Activated CD8-positive, alpha-beta T cell treated with anti-CD3 and anti-CD28 coated beads for 36 hours (primary cell): ENCODE measurements at regions of chr11 and their contacts with region 1.

Region 1: DNA sequence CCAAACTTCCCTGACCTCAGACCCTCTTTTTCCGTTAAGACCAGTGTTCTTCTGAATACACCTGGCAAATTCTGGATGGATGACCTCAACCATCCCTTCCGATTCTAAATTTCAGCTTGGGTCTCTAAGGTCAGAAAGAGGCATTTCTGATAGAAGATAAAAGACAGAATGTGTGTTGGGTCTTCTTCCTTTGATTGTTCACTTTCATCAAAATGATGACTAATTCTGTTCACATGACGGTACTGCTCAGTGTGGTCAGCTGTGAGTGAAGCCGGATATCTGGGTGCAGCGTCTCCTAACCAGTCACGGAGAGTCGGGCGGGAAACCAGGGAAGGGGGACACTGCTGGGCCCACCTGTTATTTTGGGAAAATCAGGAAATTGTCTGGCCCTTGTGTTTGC is 151.6 kb upstream of the NAV2 start:
- DNase-seq: no peak
- ATAC-seq: no peak
- H3K4me3 Mint-ChIP-seq: no peak overlapping the region
- H3K27ac Mint-ChIP-seq: no peak overlapping the region
- H3K4me1 Mint-ChIP-seq: no peaks in the 10 kb centered on the region
- H3K27me3 Mint-ChIP-seq: peaks cover 8% of the 10 kb centered on the region
- CTCF ChIP-seq: no peak

Region 2: DNA sequence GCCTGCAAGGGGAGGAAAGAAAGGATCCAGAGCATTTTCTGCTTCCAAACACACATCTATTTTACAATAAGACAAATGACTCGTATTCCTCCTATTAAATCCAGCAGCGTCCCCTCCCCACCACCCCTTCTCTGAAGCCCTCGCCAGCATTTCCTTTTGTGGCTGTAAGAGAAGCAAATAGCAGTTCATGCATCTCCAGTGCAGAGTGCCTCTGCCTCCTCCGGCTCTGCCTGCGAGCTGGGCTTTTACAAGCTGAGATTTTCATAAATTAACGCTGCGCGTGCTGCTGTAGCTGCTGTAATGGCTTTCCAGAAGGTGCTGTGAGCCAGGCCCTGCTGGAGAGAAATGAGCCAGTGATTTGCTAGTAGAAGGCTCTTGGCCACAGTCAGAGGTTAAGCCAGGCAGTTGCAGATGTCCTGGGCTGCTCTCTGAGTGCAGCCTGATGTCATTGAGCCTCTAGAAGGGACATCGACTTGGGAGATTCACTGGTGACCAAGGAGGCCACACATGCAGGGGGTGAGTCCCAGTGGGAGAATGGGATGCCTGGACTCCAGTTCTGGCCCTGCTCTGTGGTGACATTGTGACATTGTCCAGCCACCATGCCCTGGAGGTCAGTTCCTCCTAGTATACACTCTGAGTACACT is 17.1 kb after region 1 on chr11:
- CTCF ChIA-PET with region 1: interaction called, 11 read pairs
- POLR2A ChIA-PET with region 1: no interaction called
- intact Hi-C with region 1: no loop called
- DNase-seq: no peak
- ATAC-seq: no peak
- H3K4me3 Mint-ChIP-seq: no peak overlapping the region
- H3K27ac Mint-ChIP-seq: no peak overlapping the region
- H3K4me1 Mint-ChIP-seq: no peaks in the 10 kb centered on the region
- H3K27me3 Mint-ChIP-seq: no peaks in the 10 kb centered on the region
- CTCF ChIP-seq: no peak

Region 3: GRCh38 chr11:19664896-19665548 is 104.0 kb after region 1 on chr11:
- CTCF ChIA-PET with region 1: no interaction called
- POLR2A ChIA-PET with region 1: no interaction called
- intact Hi-C with region 1: no loop called
- DNase-seq: no peak
- ATAC-seq: no peak
- H3K4me3 Mint-ChIP-seq: no peak overlapping the region
- H3K27ac Mint-ChIP-seq: no peak overlapping the region
- H3K4me1 Mint-ChIP-seq: peaks cover 4% of the 10 kb centered on the region
- H3K27me3 Mint-ChIP-seq: no peaks in the 10 kb centered on the region
- CTCF ChIP-seq: no peak

Region 4: DNA sequence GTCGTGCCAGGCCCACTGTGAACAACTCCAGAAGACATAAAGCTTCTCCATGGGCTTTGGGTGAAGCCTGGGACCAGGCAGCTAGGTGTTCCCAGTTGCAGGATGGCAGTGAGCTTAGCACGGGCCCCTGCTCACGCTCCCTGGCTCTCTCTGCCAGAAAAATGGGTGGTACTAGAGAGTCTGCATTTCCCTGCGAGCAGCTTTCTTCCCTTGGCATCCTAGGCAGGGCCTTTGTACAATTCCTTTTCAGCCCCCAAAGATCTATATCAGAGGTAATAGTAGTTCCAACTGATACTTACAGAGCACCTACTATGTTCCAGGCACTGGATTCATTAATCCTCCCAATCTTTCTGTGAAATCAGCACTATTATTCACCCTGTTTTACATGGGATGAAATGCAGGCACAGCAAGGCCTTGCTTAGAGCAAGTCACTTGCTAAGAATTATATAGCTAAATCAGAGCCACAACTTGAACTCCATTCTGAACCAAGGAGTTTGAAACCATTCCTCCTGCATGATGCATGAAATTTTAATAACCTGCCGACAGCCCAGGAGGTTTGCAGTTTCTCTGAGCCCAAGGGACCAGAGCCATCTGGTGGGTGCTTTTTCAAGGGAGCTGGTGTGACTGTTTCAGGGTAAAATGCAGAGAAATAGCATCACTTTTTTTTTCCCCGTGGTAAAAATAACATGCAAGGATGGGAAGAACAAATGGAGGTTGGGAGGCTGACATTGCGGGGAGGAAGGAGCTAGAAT is 174.3 kb after region 1 on chr11:
- CTCF ChIA-PET with region 1: interaction called, 21 read pairs
- POLR2A ChIA-PET with region 1: no interaction called
- intact Hi-C with region 1: no loop called
- DNase-seq: no peak
- ATAC-seq: no peak
- H3K4me3 Mint-ChIP-seq: no peak overlapping the region
- H3K27ac Mint-ChIP-seq: no peak overlapping the region
- H3K4me1 Mint-ChIP-seq: no peaks in the 10 kb centered on the region
- H3K27me3 Mint-ChIP-seq: no peaks in the 10 kb centered on the region
- CTCF ChIP-seq: no peak

Region 5: DNA sequence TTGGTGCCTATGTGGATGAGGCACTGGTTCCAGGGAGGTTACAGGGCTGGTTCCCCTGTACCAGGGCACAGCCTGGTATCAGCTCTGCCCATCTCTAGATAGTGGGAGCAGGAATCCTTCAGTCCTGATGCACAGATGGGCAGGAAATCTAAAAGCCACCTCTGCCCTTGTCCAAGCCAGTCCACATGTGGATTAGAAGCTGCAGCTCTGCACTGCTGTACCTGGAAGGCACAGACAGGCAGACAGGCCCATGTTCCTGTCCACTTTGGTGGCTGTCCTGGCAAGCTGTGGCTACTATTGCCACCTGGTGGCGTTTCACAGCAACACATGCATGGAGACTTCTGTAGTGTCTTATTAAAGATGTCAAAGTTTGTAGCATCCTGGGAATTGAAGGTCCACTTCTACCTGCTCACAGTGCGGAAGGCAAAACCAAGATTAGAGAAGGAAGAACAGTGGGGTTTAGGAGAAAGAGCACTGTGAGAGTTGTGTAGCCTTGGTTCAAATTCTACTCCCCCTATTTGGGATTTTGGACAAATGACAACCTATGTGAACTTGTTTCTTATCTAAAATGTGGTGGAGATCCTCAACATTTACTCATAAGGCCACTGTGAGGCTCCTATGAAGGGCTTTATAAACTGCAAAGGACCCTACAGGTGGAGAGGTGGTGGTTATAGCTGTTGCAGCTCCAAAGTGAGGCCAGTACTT is 181.7 kb after region 1 on chr11:
- CTCF ChIA-PET with region 1: interaction called, 56 read pairs
- POLR2A ChIA-PET with region 1: no interaction called
- intact Hi-C with region 1: loop called (anchors 2 kb)
- DNase-seq: peak; percentile 77
- ATAC-seq: peak; percentile 84
- H3K4me3 Mint-ChIP-seq: no peak overlapping the region
- H3K27ac Mint-ChIP-seq: no peak overlapping the region
- H3K4me1 Mint-ChIP-seq: no peaks in the 10 kb centered on the region
- H3K27me3 Mint-ChIP-seq: peaks cover 6% of the 10 kb centered on the region
- CTCF ChIP-seq: peak; percentile 72

Region 6: DNA sequence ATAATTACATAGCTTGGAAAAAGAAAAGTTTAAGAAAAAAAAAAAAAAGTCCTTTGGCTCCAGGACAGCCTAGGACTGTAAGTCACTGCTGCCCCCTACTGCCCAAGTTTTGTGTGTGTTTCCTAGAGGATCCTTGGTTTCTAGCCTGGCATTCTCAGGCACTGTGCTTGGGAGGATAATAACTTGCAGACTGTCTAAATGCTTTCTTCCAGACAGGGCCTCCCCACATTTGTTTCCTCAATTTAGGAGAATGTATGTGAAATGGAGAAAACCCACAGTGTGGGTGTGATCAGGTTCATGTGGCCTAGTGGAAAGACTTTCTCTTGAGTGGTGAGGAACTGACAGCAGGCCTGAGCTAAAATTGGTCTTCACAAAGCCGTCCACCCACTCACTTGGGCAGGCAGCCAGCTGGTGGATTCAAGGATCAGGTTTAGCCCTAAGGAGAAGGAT is 342.6 kb after region 1 on chr11:
- CTCF ChIA-PET with region 1: interaction called, 11 read pairs
- POLR2A ChIA-PET with region 1: no interaction called
- intact Hi-C with region 1: loop called (anchors 5 kb)
- DNase-seq: peak; percentile 76
- ATAC-seq: no peak
- H3K4me3 Mint-ChIP-seq: no peak overlapping the region
- H3K27ac Mint-ChIP-seq: no peak overlapping the region
- H3K4me1 Mint-ChIP-seq: no peaks in the 10 kb centered on the region
- H3K27me3 Mint-ChIP-seq: no peaks in the 10 kb centered on the region
- CTCF ChIP-seq: peak; percentile 73